BJ (cell line): ENCODE measurements at regions of chr1 and their contacts with region 1.

Region 1: DNA sequence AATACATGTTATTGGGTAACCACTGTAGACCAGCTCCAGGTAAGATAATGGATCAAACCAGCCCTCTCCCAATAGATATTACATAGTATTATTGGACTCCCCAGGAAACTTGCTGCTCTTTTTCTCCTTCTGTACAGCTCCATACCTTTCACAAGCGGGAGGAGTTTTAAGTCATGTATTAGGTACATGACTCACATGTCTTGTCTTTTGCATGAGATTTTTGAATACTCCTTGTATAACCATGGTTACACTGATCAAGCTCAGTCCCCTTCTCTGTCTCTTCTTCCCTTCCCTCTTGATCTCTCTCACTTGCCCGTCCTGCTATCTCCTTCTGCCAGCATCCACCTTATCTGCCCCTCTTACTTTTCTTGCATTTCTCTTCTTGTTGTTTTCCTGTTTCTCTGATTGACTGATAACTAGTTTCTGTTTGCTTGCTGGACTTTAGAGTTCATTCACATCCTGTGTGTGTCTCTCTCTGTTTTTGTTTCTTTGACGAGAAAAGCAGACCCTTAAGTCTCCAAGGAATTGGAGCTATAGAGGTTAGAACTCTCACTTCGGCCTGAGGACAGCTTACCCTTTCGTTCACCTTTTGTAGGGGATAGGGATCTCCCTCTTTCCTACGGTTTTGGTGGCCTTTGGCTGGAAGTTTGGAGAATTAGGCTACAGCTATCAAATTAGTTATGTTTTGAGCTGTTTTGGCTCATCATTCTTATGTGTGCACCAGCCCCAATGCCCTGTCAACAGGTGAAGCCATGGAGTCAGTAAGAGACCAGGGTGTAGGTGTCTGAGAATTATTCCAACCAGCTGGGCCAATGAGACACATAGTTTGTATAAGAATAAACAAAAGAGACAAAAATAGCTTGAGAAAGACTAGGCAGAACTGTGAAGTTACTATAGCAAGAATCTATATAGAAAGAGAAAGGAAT is 49.0 kb upstream of the ASB17 start:
- DNase-seq: no peak
- H3K4me3 ChIP-seq: no peak overlapping the region
- H3K27me3 ChIP-seq: no peaks in the 10 kb centered on the region
- CTCF ChIP-seq: no peak

Region 2: DNA sequence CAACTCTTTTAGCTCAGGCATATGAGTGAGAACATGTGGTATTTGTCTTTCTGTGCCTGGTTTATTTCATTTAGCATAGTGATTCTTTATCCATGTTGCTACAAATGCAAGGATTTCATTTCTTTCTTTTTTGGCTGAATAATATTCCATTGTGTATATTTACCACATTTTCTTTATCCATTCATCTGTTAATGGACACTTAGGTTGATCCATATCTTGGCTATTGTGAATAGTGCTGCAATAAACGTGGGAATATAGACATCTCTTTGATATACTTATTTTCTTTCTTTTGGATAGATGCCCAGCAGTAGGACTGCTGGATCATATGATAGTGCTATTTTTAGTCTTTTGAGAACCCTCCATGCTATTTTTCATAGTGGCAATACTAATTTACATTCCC is 79.9 kb before region 1 on chr1:
- CTCF ChIA-PET with region 1: no interaction called
- POLR2A ChIA-PET with region 1: no interaction called
- DNase-seq: no peak
- H3K4me3 ChIP-seq: no peak overlapping the region
- H3K27me3 ChIP-seq: no peaks in the 10 kb centered on the region
- CTCF ChIP-seq: no peak

Region 3: DNA sequence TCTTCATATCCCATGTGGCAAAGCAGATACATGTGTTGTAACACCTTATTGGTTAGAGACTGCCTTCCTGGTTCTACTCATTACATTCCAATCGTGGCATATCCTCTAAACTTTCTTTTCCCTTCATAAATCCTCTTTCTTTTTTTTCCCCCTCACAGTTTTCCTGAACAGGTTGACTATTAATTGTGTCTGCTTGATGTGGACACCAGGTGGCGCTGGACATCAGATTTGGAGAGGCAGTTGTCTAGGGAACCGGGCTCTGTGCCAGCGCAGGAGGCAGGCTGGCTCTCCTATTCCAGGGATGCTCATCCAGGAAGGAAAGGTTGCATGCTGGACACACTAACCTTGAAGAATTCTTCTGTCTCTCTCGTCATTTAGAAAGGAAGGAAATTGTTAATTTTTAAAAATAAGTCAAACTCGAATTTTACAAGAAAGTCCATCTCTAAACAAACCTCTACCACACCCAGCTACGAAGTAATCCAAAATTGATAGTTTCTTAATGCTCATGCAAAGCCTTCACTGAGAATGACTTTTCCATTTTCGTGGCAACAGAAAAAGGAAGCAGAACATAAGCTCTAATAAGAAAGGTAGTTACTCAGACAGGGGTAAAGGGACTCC is 10.4 kb after region 1 on chr1:
- CTCF ChIA-PET with region 1: interaction called, 24 read pairs
- POLR2A ChIA-PET with region 1: no interaction called
- DNase-seq: no peak
- H3K4me3 ChIP-seq: no peak overlapping the region
- H3K27me3 ChIP-seq: 0 out of 2 replicates have a peak, but pooled peaks cover 1% of the 10 kb centered on the region
- CTCF ChIP-seq: peak; percentile 88

Region 4: GRCh38 chr1:76352741-76353435 is 371.7 kb after region 1 on chr1:
- CTCF ChIA-PET with region 1: no interaction called
- POLR2A ChIA-PET with region 1: no interaction called
- DNase-seq: no peak
- H3K4me3 ChIP-seq: no peak overlapping the region
- H3K27me3 ChIP-seq: no peaks in the 10 kb centered on the region
- CTCF ChIP-seq: no peak